ENCODE measurements at regions of chr10 and their contacts with region 1.

Region 1: GRCh38 chr10:14878266-14879054 is at the start of gene SUV39H2:
- DNase-seq: peak; percentile 96
- H3K4me3 ChIP-seq: peak within 1 kb of the TSS; percentile 88
- H3K27ac ChIP-seq: peak within 1 kb of the TSS; percentile 61
- H3K4me1 ChIP-seq: peaks cover 42% of the 10 kb centered on the region
- CTCF ChIP-seq: no peak
- total RNA-seq, gene SUV39H2: 31.5 and 43.4 TPM in 2 replicates

Region 2: DNA sequence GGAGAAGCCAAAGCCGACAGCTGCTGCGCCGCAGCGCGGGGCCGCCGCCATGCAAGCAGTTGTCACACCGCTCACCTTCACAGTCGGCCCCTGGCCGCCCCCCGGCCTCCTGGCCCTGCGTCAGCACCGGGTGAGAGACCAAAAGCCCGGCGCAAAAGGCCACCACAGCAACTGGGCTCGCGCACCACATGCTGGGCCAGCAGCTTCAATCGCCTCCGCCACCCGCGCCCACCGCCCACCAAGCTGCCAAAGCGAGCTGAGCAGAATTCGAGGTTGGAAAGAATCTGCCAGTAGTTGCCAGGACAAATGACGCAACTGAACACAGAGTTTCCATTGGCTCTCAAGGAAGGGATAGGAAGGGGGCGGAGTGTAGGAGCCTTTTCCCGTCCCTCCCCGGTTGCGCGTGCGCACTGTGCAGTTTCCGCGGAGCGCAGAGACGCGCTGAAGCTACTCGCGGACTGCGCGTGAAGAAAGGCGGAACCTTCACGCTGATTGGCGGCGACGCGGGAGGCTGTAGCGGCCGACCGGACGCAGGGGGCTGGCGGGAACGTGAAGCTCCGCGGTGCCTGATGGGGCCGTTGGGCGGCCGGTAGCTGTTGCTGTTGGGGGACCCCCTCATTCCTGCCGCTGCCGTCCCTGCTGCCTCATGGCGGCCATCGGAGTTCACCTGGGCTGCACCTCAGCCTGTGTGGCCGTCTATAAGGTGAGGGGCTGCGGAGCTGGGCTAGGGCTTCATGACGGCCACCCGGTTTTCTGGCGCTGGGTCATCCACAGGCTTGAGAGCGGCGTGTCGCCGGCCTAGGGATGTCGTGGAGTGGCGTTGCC is 40.5 kb before region 1 on chr10 and contains the starts of genes CDNF, HSPA14 and MSANTD7:
- CTCF ChIA-PET with region 1: interaction called, 7 read pairs
- POLR2A ChIA-PET with region 1: interaction called, 16 read pairs
- intact Hi-C with region 1: loop called (anchors 1 kb)
- DNase-seq: peak; percentile 100
- H3K4me3 ChIP-seq: peak within 1 kb of the TSS; percentile 88
- H3K27ac ChIP-seq: peak within 1 kb of the TSS; percentile 56
- H3K4me1 ChIP-seq: peaks cover 12% of the 10 kb centered on the region
- CTCF ChIP-seq: no peak
- total RNA-seq, gene CDNF: 0.72 and 3.2 TPM in 2 replicates
- total RNA-seq, gene HSPA14: 21.8 and 29.4 TPM in 2 replicates
- total RNA-seq, gene MSANTD7: 22.2 and 26.5 TPM in 2 replicates

Region 3: GRCh38 chr10:14889318-14889717 is 10.9 kb after region 1 on chr10:
- CTCF ChIA-PET with region 1: no interaction called
- POLR2A ChIA-PET with region 1: interaction called, 12 read pairs
- intact Hi-C with region 1: no loop called
- DNase-seq: no peak
- H3K4me3 ChIP-seq: no peak overlapping the region
- H3K27ac ChIP-seq: no peak overlapping the region
- H3K4me1 ChIP-seq: no peaks in the 10 kb centered on the region
- CTCF ChIP-seq: peak; percentile 63

Region 4: GRCh38 chr10:14954001-14954770 is 75.7 kb after region 1 on chr10 and contains the start of gene DCLRE1C:
- CTCF ChIA-PET with region 1: interaction called, 6 read pairs
- POLR2A ChIA-PET with region 1: interaction called, 23 read pairs
- intact Hi-C with region 1: loop called (anchors 1 kb)
- DNase-seq: peak; percentile 97
- H3K4me3 ChIP-seq: peak within 1 kb of the TSS; percentile 83
- H3K27ac ChIP-seq: peak within 1 kb of the TSS; percentile 96
- H3K4me1 ChIP-seq: peaks cover 57% of the 10 kb centered on the region
- CTCF ChIP-seq: no peak
- total RNA-seq, gene DCLRE1C: 45.3 and 81.3 TPM in 2 replicates

Region 5: DNA sequence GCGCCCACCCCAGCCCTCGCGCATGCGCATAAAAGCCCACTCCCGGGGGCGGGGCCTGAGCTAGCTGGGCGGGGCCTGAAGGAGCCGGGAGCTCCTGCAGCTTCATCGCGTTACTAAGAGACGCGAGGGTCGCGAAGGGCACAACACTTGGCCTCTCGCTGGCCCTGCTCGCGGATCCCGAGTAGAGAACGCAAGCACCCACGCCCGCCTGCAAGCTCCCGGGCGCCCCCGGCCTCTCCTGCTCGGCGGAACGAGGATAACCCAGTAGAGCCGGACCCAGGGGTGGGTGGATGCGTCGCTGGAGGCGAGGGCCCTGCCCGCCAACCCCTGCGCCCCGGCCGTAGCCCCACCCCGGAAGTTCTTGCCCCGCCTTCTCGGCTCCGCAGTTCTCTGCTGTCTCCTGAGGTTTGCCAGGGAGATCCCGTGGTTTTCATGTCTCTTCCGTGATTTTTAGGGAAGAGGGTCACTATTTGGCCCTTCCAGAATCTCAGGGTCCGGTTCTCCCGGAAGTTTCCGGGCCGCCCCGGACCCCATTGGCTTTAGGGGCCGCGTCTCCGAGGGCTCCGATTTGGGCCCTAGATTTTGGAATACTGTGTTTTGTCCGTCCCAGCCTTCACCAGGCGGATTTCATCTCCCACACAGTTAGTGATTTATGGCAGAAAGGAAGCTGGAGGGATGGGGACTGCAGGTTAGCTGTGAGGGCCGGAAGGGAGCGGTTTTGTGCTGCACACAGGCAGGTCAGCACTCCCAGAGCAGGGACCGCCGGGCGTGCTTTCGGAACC is 81.0 kb after region 1 on chr10 and contains the start of gene MEIG1:
- CTCF ChIA-PET with region 1: interaction called, 6 read pairs
- POLR2A ChIA-PET with region 1: interaction called, 23 read pairs
- intact Hi-C with region 1: loop called (anchors 1 kb)
- DNase-seq: peak; percentile 93
- H3K4me3 ChIP-seq: peak within 1 kb of the TSS; percentile 76
- H3K27ac ChIP-seq: peak within 1 kb of the TSS; percentile 94
- H3K4me1 ChIP-seq: peaks cover 43% of the 10 kb centered on the region
- CTCF ChIP-seq: no peak
- total RNA-seq, gene MEIG1: 1.1 and 2.5 TPM in 2 replicates

Region 6: DNA sequence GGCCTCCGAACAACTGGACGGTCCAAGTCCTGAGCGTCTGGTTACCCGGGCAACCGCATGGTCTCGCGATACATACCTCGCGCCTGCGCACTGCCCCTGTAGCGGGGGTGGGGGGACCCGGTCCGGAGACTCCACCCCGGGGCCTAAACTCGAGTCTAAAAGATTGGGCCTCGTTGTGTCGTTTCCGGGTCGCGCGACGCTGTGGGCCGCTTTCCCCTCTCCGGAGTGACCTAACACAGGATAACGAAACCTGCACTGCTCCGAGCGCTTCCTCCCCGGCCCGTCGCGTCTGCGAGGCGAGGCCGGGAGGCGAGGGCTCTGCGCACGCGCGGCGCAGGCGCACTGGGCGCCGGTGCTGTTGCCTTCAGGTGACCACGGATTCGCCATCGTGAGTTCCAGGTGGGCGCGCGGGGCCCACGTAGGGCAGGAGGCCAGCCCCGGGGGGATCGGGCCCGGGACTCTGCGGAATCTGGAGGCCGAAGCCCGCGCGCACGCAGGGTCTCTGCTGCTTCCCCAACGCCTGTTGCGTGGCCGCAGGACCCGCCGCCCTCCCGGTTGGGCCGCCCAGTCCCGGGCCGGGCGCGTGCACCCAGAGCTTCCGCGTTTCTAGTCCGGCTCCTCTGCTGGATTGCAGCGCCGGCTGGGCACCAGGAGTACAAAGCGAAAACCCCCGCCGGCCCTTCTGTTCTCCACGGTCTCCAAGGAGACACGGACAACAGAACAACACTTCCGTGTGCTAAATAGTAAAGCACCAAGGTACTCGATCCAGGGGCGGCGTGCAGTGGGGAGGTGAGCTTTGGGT is 218.8 kb after region 1 on chr10 and contains the start of gene RPP38:
- CTCF ChIA-PET with region 1: interaction called, 3 read pairs
- POLR2A ChIA-PET with region 1: interaction called, 3 read pairs
- intact Hi-C with region 1: loop called (anchors 5 kb)
- DNase-seq: peak; percentile 95
- H3K4me3 ChIP-seq: peak within 1 kb of the TSS; percentile 89
- H3K27ac ChIP-seq: peak within 1 kb of the TSS; percentile 89
- H3K4me1 ChIP-seq: peaks cover 17% of the 10 kb centered on the region
- CTCF ChIP-seq: no peak
- total RNA-seq, gene RPP38: 13.2 and 15.1 TPM in 2 replicates